ENCODE measurements at regions of chr1 and their contacts with region 1.

Region 1: GRCh38 chr1:200247518-200247917 is 162.3 kb downstream of the ZNF281 start:
- DNase-seq: no peak
- H3K4me3 Mint-ChIP-seq: no peak overlapping the region
- H3K27ac Mint-ChIP-seq: no peak overlapping the region
- H3K4me1 Mint-ChIP-seq: peaks cover 5% of the 10 kb centered on the region
- H3K27me3 Mint-ChIP-seq: no peaks in the 10 kb centered on the region
- CTCF ChIP-seq: no peak

Region 2: GRCh38 chr1:200184196-200184595 is 63.3 kb before region 1 on chr1:
- CTCF ChIA-PET with region 1: no interaction called
- POLR2A ChIA-PET with region 1: no interaction called
- intact Hi-C with region 1: no loop called
- DNase-seq: peak; percentile 100
- H3K4me3 Mint-ChIP-seq: peak overlapping the region; percentile 18
- H3K27ac Mint-ChIP-seq: no peak overlapping the region
- H3K4me1 Mint-ChIP-seq: peaks cover 44% of the 10 kb centered on the region
- H3K27me3 Mint-ChIP-seq: no peaks in the 10 kb centered on the region
- CTCF ChIP-seq: no peak

Region 3: DNA sequence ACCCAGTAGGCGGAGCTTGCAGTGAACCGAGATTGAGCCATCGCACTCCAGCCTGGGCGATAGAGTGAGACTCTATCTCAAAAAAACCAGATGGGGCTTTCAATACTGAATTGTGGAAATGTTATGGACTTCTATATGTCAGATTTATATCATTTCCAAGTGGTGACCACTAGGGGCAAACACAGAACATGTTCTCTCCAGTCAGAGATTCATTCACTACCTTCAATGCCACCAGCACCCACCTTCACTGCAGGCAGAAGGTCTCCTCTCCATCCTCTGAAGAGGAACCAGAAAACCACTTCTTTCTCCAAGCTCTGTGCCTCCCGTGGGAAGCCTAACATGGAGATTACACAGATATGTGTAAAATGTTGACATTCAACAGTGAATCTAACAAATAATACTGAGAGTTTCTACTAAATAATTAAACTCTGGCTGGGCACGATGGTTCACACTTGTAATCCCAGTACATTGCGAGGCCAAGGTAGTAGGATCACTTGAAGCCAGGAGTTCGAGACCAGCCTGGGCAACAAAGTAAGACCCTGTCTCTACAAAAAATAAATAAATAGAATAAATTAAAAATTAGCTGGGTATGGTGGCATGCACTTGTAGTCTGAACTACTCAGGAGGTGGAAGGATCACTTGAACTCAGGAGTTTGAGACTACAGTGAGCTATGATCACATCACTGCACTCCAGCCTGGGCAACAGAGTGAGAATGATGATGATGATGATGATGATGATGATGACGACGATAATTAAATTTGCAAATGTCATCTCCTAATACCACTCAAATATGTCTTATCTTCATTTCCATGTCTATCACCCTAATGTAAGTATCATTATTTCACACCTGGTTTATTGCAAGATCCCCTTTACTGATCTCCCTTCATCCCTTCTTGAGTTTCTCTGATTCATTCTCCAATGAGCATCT is 11.2 kb after region 1 on chr1:
- CTCF ChIA-PET with region 1: interaction called, 16 read pairs
- POLR2A ChIA-PET with region 1: no interaction called
- intact Hi-C with region 1: no loop called
- DNase-seq: peak; percentile 62
- H3K4me3 Mint-ChIP-seq: no peak overlapping the region
- H3K27ac Mint-ChIP-seq: no peak overlapping the region
- H3K4me1 Mint-ChIP-seq: no peaks in the 10 kb centered on the region
- H3K27me3 Mint-ChIP-seq: no peaks in the 10 kb centered on the region
- CTCF ChIP-seq: peak; percentile 53